ENCODE measurements at regions of chr12 and their contacts with region 1.

Region 1: GRCh38 chr12:98743347-98743953 is 98.4 kb downstream of the APAF1 start:
- DNase-seq: peak; percentile 76
- H3K4me3 Mint-ChIP-seq: no peak overlapping the region
- H3K27ac Mint-ChIP-seq: peak overlapping the region; percentile 57
- H3K4me1 Mint-ChIP-seq: peaks cover 60% of the 10 kb centered on the region
- H3K27me3 Mint-ChIP-seq: peaks cover 16% of the 10 kb centered on the region

Region 2: DNA sequence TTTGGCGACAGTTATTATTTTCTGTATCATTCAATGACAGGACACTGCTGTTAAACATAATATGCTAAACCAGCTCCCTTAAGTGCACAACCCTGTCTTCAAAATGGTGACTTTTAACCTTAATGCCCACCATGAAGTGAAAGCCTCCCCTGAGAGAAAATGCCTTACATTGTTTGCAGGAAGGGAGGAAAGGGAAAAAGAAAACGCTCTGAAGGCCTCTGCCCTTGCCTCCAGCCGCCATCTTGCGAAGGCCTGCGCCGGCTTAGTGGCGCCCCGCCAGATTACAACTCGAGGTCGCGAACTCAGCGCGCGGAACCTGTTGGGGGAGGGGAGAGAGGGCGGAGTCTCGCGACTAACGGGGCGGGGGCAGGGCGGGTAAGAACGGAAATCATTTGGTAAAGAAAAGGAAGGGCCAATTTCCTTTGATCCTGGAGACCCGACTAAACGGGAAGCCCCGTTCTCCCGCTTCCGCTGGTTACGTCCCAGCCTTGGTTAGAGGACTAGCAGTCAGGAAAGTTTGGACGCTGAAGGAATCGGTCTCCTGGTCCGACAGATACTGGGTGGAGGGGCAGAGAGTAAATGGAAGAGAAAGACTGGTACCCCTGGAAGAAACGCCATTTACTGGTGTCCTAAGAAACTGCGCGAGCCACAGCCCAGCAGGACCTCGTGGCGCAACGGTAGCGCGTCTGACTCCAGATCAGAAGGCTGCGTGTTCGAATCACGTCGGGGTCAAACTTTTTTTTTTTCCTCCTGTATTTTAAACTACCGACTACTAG is 239.7 kb before region 1 on chr12:
- CTCF ChIA-PET with region 1: no interaction called
- POLR2A ChIA-PET with region 1: no interaction called
- intact Hi-C with region 1: loop called (anchors 1 kb)
- DNase-seq: peak; percentile 97
- H3K4me3 Mint-ChIP-seq: peak overlapping the region; percentile 86
- H3K27ac Mint-ChIP-seq: peak overlapping the region; percentile 99
- H3K4me1 Mint-ChIP-seq: peaks cover 39% of the 10 kb centered on the region
- H3K27me3 Mint-ChIP-seq: peaks cover 9% of the 10 kb centered on the region

Region 3: DNA sequence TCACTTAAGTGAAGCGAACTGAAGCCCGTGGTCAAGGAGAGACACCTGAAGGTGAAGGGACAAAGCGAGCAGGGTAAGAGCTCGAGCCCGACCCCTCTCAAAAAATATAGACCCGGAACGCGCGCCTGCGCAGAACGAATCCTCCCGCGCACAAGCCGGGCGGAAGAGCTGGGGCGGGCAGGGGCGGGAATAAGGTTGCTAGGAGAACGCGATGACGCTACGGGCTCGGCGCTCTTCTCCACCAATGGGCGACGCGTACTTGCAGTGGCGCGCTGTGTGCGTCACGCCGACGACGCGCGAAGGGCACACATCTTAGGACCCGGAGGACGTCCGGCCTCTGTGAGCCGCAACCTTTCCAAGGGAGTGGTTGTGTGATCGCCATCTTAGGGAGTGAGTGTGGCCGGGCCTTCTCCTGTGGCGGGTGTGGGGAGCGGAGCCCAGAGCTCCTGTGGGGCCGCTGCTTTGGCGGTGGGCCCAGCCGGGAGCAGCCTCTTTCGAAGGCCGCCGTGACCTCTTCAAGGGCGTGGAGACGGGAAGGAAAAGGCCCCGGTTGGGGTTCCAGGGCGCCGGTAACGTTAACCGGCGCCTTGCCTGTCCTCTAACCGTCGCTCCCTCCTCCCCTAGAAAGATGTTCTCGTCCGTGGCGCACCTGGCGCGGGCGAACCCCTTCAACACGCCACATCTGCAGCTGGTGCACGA is 149.9 kb before region 1 on chr12 and contains the start of gene SLC25A3:
- CTCF ChIA-PET with region 1: no interaction called
- POLR2A ChIA-PET with region 1: interaction called, 4 read pairs
- intact Hi-C with region 1: loop called (anchors 1 kb)
- DNase-seq: peak; percentile 96
- H3K4me3 Mint-ChIP-seq: peak within 1 kb of the TSS; percentile 91
- H3K27ac Mint-ChIP-seq: peak within 1 kb of the TSS; percentile 97
- H3K4me1 Mint-ChIP-seq: peaks cover 29% of the 10 kb centered on the region
- H3K27me3 Mint-ChIP-seq: no peaks in the 10 kb centered on the region
- total RNA-seq, gene SLC25A3: 584 to 620 TPM

Region 4: GRCh38 chr12:98653866-98654493 is 89.5 kb before region 1 on chr12:
- CTCF ChIA-PET with region 1: interaction called, 4 read pairs
- POLR2A ChIA-PET with region 1: no interaction called
- intact Hi-C with region 1: loop called (anchors 1 kb)
- DNase-seq: no peak
- H3K4me3 Mint-ChIP-seq: no peak overlapping the region
- H3K27ac Mint-ChIP-seq: no peak overlapping the region
- H3K4me1 Mint-ChIP-seq: peaks cover 14% of the 10 kb centered on the region
- H3K27me3 Mint-ChIP-seq: no peaks in the 10 kb centered on the region

Region 5: DNA sequence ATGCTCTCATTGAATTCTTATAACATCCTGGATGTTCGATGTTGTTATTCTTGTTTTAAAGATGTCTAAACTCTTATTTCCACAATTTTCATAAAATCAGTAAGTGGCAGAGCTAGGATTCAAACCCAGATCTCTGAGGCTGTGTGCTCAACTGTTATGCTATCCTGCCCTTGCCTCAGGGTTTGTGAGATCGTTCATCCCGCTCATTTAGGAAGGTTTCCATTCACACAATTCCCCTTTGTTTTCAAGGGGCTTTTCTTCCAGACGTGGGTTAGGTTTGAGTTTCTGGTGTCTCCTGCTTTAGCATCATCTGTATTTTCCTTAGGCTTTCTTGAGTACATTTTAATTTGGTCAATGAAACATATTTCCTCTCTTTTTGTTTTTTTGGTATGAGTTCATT is 29.0 kb before region 1 on chr12:
- CTCF ChIA-PET with region 1: interaction called, 11 read pairs
- POLR2A ChIA-PET with region 1: no interaction called
- intact Hi-C with region 1: no loop called
- DNase-seq: no peak
- H3K4me3 Mint-ChIP-seq: no peak overlapping the region
- H3K27ac Mint-ChIP-seq: no peak overlapping the region
- H3K4me1 Mint-ChIP-seq: no peaks in the 10 kb centered on the region
- H3K27me3 Mint-ChIP-seq: no peaks in the 10 kb centered on the region

Region 6: GRCh38 chr12:98754095-98754494 is 10.6 kb after region 1 on chr12:
- CTCF ChIA-PET with region 1: interaction called, 39 read pairs
- POLR2A ChIA-PET with region 1: interaction called, 35 read pairs
- intact Hi-C with region 1: loop called (anchors 1 kb)
- DNase-seq: peak; percentile 79
- H3K4me3 Mint-ChIP-seq: peak overlapping the region; percentile 6
- H3K27ac Mint-ChIP-seq: peak overlapping the region; percentile 47
- H3K4me1 Mint-ChIP-seq: peaks cover 17% of the 10 kb centered on the region
- H3K27me3 Mint-ChIP-seq: peaks cover 2% of the 10 kb centered on the region

Region 7: DNA sequence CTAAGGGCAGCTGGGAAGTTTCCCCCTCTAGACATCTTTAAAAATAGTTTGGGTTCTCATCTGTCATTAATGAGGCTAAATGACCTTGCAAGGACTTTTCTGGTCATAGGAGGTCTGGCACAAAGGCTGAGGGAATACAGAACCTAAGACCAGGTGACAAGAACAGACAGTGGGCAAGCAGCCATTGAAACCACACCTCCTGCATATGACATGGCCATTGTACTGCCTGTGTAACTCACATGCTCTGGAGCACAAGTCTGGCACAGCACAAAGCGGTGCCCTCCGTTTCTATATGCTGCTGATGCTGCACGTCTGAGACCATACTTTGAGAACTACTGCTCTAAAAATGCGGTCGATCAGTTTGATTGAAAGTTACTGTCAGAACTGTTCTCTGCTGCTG is 44.9 kb after region 1 on chr12:
- CTCF ChIA-PET with region 1: no interaction called
- POLR2A ChIA-PET with region 1: no interaction called
- intact Hi-C with region 1: no loop called
- DNase-seq: no peak
- H3K4me3 Mint-ChIP-seq: no peak overlapping the region
- H3K27ac Mint-ChIP-seq: no peak overlapping the region
- H3K4me1 Mint-ChIP-seq: no peaks in the 10 kb centered on the region
- H3K27me3 Mint-ChIP-seq: peaks cover 13% of the 10 kb centered on the region

Region 8: GRCh38 chr12:100266835-100267618 is 1523.6 kb after region 1 on chr12 and contains the starts of genes DEPDC4 and SCYL2:
- CTCF ChIA-PET with region 1: no interaction called
- POLR2A ChIA-PET with region 1: no interaction called
- intact Hi-C with region 1: loop called (anchors 5 kb)
- DNase-seq: peak; percentile 95
- H3K4me3 Mint-ChIP-seq: peak within 1 kb of the TSS; percentile 94
- H3K27ac Mint-ChIP-seq: peak within 1 kb of the TSS; percentile 96
- H3K4me1 Mint-ChIP-seq: peaks cover 24% of the 10 kb centered on the region
- H3K27me3 Mint-ChIP-seq: no peaks in the 10 kb centered on the region
- total RNA-seq, gene DEPDC4: 2.4 to 3.5 TPM
- total RNA-seq, gene SCYL2: 24.5 to 26.7 TPM